ENCODE measurements at regions of chr2 and their contacts with region 1.

Region 1: GRCh38 chr2:215931256-215931903 is 82.0 kb downstream of the MREG start:
- DNase-seq: peak; percentile 62
- H3K4me3 ChIP-seq: peak overlapping the region in 1 of 2 experiments; percentile 21; a peak in 1 of 4 replicates
- H3K27ac ChIP-seq: peak overlapping the region in 1 of 2 experiments; percentile 40; a peak in 1 of 4 replicates
- H3K4me1 ChIP-seq: peaks cover 2 to 28% of the 10 kb centered on the region in 2 experiments; a peak in 3 of 4 replicates
- H3K27me3 ChIP-seq: no peaks in the 10 kb centered on the region
- CTCF ChIP-seq: peak; percentile 98
- EP300 ChIP-seq: no peak
- RAD21 ChIP-seq: peak; percentile 97

Region 2: DNA sequence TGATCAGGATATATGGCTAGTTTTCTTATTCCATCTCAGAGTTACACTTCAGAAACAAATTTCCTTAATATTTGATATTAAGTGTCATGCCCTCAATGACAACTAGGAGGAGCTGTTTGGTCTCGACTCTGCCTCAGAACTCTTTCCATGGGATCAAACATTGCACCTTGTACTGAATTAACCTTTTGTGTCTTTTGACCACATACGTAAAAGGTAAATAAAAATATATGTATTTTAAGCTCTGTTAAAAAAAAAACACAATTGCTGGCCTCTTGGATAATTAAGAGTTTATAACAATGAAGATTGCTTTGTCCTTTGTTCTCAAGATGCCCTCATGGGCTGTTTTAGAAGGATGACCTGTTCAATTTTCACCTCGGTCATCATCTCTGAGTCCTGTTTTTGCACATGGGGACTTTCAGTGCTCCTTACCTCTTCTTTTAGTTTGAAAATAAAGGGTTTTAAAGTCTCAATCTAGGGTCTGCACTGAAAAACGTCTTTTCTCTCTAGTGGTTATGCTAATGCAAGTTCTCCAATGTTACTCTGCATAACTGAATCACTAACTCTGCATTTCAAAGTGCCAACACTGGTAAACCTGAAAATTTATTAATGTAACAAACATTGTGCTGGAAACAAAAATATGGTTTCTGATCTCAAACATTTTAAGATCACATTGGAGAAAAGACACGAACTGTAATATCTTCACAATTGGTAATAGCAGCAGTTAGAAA is 476.7 kb before region 1 on chr2:
- CTCF ChIA-PET with region 1: interaction called, 15 read pairs
- POLR2A ChIA-PET with region 1: no interaction called
- DNase-seq: peak; percentile 42
- H3K4me3 ChIP-seq: no peak overlapping the region; a peak in 1 of 4 replicates
- H3K27ac ChIP-seq: no peak overlapping the region
- H3K4me1 ChIP-seq: no peaks in the 10 kb centered on the region; a peak in 1 of 4 replicates
- H3K27me3 ChIP-seq: no peaks in the 10 kb centered on the region
- CTCF ChIP-seq: peak; percentile 85
- EP300 ChIP-seq: no peak
- RAD21 ChIP-seq: peak; percentile 82

Region 3: DNA sequence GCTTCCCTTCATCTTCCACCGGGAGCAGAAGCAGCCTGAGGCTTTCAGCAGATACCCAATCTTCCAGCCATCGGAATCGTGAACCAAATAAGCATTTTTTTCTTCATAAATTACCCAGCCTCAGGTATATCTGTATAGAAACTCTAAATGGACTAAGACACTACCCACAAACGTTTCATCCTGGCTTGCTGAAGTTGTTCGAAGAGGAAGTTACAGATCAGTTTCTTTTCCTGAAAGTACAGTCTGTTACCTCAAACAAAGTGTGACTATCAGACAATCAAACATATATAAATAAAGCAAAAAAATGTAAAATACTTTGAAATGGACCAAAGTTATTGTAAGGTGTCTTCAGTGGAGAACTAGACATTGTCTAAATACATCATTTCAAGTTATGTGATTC is 15.9 kb before region 1 on chr2:
- CTCF ChIA-PET with region 1: interaction called, 26 read pairs
- POLR2A ChIA-PET with region 1: no interaction called
- DNase-seq: no peak
- H3K4me3 ChIP-seq: no peak overlapping the region
- H3K27ac ChIP-seq: no peak overlapping the region
- H3K4me1 ChIP-seq: peaks cover 9 to 22% of the 10 kb centered on the region in 2 experiments
- H3K27me3 ChIP-seq: no peaks in the 10 kb centered on the region
- CTCF ChIP-seq: no peak
- EP300 ChIP-seq: no peak
- RAD21 ChIP-seq: no peak

Region 4: GRCh38 chr2:215920244-215921100 is 10.9 kb before region 1 on chr2:
- CTCF ChIA-PET with region 1: interaction called, 26 read pairs
- POLR2A ChIA-PET with region 1: no interaction called
- DNase-seq: peak; percentile 67
- H3K4me3 ChIP-seq: no peak overlapping the region
- H3K27ac ChIP-seq: peak overlapping the region in 1 of 2 experiments; percentile 53; a peak in 1 of 4 replicates
- H3K4me1 ChIP-seq: peaks cover 9 to 31% of the 10 kb centered on the region in 2 experiments
- H3K27me3 ChIP-seq: no peaks in the 10 kb centered on the region
- CTCF ChIP-seq: peak; percentile 96
- EP300 ChIP-seq: no peak
- RAD21 ChIP-seq: peak; percentile 96

Region 5: DNA sequence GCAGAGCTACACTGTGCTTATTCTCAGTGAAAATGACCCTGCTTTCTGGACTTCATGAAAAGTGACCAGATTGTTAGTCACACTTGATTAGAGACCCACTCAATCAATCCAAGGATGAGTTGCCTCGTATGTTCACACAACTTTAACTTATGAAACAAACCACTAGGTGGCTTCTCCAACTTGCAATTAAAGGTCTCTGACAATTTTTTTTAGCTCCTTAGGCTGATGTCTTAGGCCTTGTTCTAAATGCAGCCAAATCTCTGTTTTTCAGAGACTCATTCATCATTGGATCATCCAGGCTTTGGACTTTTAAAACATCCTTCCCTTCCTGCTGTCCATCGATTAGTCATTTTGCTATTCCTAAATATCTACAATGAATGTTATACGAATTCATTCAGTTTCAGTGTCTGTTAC is 18.6 kb after region 1 on chr2:
- CTCF ChIA-PET with region 1: interaction called, 53 read pairs
- POLR2A ChIA-PET with region 1: no interaction called
- DNase-seq: peak; percentile 32
- H3K4me3 ChIP-seq: no peak overlapping the region
- H3K27ac ChIP-seq: no peak overlapping the region
- H3K4me1 ChIP-seq: peaks cover 0 to 2% of the 10 kb centered on the region in 2 experiments; a peak in 2 of 4 replicates
- H3K27me3 ChIP-seq: no peaks in the 10 kb centered on the region
- CTCF ChIP-seq: peak; percentile 63
- EP300 ChIP-seq: no peak
- RAD21 ChIP-seq: peak; percentile 66

Region 6: GRCh38 chr2:215994901-215995300 is 63.5 kb after region 1 on chr2:
- CTCF ChIA-PET with region 1: no interaction called
- POLR2A ChIA-PET with region 1: no interaction called
- DNase-seq: no peak
- H3K4me3 ChIP-seq: no peak overlapping the region
- H3K27ac ChIP-seq: no peak overlapping the region
- H3K4me1 ChIP-seq: no peaks in the 10 kb centered on the region
- H3K27me3 ChIP-seq: no peaks in the 10 kb centered on the region
- CTCF ChIP-seq: no peak
- EP300 ChIP-seq: no peak
- RAD21 ChIP-seq: no peak